PC-9 (cell line): ENCODE measurements at regions of chr10 and their contacts with region 1.

Region 1: GRCh38 chr10:103244663-103245271 is 920 bp upstream of the RPEL1 start:
- DNase-seq: peak; percentile 49 to 58
- H3K4me3 ChIP-seq: no peak overlapping the region
- H3K27ac ChIP-seq: no peak overlapping the region
- H3K4me1 ChIP-seq: peaks cover 40% of the 10 kb centered on the region
- H3K27me3 ChIP-seq: no peaks in the 10 kb centered on the region
- CTCF ChIP-seq: peak; percentile 83

Region 2: GRCh38 chr10:103069453-103070331 is 175.1 kb before region 1 on chr10:
- CTCF ChIA-PET with region 1: no interaction called
- POLR2A ChIA-PET with region 1: no interaction called
- intact Hi-C with region 1: loop called (anchors 10 kb)
- DNase-seq: peak; percentile 40 to 45
- H3K4me3 ChIP-seq: no peak overlapping the region
- H3K27ac ChIP-seq: no peak overlapping the region
- H3K4me1 ChIP-seq: no peaks in the 10 kb centered on the region; the same call in 1 of the 2 replicates
- H3K27me3 ChIP-seq: no peaks in the 10 kb centered on the region
- CTCF ChIP-seq: peak; percentile 71

Region 3: DNA sequence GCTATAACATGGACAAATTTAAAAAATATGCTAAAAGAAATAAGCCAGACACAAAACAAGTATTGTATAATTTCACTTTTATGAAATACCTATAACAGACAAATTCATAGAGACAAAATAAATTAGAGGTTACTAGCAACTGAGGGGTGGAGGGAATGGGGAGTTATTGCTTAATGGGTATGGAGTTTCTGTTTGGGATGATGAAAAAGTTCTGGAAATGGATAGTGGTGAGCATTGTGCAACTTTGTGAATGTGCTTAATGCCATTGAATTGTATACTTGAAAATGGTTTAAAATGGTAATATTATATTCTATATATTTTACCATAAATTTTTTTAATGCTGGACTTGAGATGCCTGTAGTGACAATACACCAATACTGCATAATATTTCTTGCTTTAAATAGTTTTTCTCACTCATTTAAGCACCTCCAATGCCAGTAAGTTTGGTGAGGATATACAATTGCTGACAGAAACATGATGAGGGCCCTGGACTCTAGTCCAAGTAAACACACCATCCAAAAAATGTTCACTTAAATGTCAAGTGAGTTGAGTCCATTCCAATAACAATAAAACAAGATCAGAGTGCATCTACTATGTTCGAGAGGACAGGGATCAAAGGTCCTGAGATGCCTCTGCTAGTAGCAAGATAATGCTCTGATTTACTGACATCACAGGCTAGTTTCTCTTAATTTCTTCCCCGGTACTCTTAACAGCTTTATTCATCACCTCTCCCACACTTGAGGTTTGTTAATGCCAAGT is 123.6 kb before region 1 on chr10:
- CTCF ChIA-PET with region 1: interaction called, 8 read pairs
- POLR2A ChIA-PET with region 1: interaction called, 11 read pairs
- intact Hi-C with region 1: loop called (anchors 10 kb)
- DNase-seq: no peak
- H3K4me3 ChIP-seq: no peak overlapping the region
- H3K27ac ChIP-seq: peak overlapping the region; percentile 20; the same call in 1 of the 2 replicates
- H3K4me1 ChIP-seq: no peaks in the 10 kb centered on the region
- H3K27me3 ChIP-seq: no peaks in the 10 kb centered on the region
- CTCF ChIP-seq: no peak

Region 4: DNA sequence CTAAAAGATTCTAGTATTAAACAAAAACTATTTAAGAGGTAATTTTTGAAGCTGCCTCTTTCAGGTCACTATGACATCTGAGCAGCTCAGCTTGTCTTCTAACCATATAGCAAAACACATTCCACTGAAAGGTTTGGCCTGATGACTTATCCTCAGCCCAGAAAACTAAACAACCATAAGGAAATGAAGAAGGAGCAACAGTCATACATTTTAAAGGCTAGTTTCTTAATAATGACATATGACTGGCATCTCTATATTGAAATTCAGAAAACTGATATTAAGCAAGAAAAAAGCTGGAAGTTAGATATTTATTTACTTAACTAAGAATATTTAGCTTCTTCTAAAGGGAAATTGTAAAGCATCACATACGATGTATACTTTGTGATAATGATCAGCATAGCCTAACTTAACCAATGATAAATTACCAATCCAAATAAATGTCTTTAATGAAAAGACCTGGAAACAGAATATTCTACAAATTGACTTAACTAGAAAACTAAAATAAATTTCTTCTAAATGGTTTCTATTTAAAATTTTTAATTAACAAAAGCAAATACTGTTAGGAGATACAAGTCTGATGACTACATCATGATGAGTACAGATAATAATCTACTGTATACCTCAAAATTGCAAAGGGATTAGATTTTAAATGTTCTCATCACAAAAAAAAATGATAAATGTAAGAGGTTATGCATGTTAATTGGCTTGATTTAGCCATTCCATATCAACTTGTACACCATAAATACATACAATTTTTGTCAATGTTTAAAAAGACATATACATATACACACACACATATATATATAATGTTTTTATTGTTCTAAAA is 76.1 kb before region 1 on chr10:
- CTCF ChIA-PET with region 1: interaction called, 11 read pairs
- POLR2A ChIA-PET with region 1: interaction called, 3 read pairs
- intact Hi-C with region 1: loop called (anchors 5 kb)
- DNase-seq: peak in 1 of 2 experiments; percentile 88
- H3K4me3 ChIP-seq: peak overlapping the region; percentile 32; the same call in 1 of the 2 replicates
- H3K27ac ChIP-seq: peak overlapping the region; percentile 84
- H3K4me1 ChIP-seq: peaks cover 62% of the 10 kb centered on the region
- H3K27me3 ChIP-seq: no peaks in the 10 kb centered on the region
- CTCF ChIP-seq: no peak

Region 5: DNA sequence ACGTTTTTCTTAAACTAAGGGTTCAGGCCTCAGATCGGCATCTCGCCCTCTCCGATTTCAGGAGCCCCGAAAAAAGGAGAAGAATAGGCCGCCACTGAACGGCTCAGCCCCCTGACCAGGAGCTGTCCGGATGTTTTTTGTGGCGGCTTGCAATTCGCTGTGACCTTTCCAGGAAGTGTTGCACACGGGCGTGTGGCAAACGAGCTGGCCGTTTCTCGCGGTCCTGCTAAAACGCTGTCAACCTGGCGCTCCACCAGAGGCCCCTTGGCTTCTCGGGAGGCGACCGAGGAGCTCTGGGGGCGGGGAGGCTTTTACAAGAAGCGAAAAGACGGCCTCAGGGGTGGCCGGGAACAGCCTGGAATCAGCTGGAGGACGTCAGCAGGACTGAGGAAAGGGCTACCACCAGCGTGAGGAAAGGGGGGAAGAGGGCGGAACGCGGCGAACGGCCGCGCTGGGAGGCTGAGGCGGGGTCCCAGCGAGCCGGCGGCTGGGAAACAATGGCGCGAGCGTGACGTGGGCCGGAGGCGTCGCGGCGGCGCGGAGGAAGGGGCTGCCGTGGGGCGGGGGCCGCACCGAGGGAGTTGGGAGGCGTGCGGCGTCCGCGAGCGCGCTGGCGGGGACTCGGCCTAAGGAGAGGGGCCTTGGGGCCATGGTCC is 52.2 kb before region 1 on chr10:
- CTCF ChIA-PET with region 1: no interaction called
- POLR2A ChIA-PET with region 1: interaction called, 3 read pairs
- intact Hi-C with region 1: loop called (anchors 1 kb)
- DNase-seq: peak; percentile 43 to 65
- H3K4me3 ChIP-seq: peak overlapping the region; percentile 92
- H3K27ac ChIP-seq: peak overlapping the region; percentile 84
- H3K4me1 ChIP-seq: peaks cover 55% of the 10 kb centered on the region
- H3K27me3 ChIP-seq: no peaks in the 10 kb centered on the region
- CTCF ChIP-seq: no peak

Region 6: GRCh38 chr10:103278862-103279298 is 34.1 kb after region 1 on chr10:
- CTCF ChIA-PET with region 1: interaction called, 3 read pairs
- POLR2A ChIA-PET with region 1: no interaction called
- intact Hi-C with region 1: loop called (anchors 5 kb)
- DNase-seq: peak in 1 of 2 experiments; percentile 10
- H3K4me3 ChIP-seq: peak overlapping the region; percentile 16; the same call in 1 of the 2 replicates
- H3K27ac ChIP-seq: no peak overlapping the region
- H3K4me1 ChIP-seq: peaks cover 22% of the 10 kb centered on the region
- H3K27me3 ChIP-seq: no peaks in the 10 kb centered on the region
- CTCF ChIP-seq: no peak

Region 7: DNA sequence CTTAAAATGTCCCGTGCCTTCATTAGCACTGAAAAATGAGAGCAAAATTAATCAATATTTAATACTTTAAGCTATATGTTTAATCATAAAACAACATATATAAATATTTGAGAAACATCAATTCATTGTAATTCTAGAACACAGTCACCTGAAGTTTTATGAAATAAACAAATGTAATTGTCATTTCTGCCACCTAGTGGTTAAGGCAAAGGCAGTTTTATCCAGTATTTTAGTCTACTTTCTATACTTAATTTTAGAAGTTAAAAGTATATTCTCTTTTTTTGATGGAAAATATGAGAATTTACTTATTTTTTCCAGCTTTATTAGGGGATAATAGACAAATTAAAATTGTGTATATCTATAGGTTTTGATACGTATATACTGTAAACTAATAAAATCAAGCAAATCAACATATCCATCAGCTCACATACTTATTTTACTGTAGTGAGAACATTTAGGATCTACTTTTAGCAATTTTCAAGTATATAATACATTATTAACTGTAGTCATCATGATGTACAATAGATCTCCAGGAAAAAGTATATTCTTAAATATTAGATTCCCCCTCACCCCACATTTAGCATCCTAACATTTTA is 89.3 kb after region 1 on chr10:
- CTCF ChIA-PET with region 1: interaction called, 6 read pairs
- POLR2A ChIA-PET with region 1: no interaction called
- intact Hi-C with region 1: loop called (anchors 5 kb)
- DNase-seq: no peak
- H3K4me3 ChIP-seq: no peak overlapping the region
- H3K27ac ChIP-seq: no peak overlapping the region
- H3K4me1 ChIP-seq: no peaks in the 10 kb centered on the region
- H3K27me3 ChIP-seq: no peaks in the 10 kb centered on the region
- CTCF ChIP-seq: peak; percentile 71